ENCODE measurements at regions of chr19 and their contacts with region 1.

Region 1: DNA sequence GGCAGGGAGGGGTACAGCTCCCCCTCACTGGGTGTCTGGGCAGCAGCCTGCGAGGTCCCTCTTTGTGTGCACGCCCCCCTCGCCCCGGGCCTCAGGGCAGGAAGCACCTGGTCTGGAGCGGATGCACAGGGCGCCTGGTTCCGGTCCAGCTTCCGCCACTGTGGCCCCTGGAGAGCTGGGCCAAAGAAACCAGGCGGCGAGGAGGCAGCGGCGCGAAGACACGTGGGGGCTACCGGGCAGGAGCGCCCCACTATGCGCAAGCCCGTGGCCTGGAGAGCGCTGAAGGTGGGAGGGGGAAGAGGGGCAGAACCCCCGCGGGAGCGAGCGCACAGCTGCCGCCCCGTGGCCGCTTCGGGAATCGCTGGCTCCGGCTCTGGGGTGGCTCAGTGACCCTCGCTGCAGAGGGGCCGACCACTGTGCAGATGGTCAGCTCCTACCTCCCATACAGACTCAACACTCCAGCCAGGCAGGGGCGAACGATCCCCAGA is 1.7 kb upstream of the LYL1 start:
- DNase-seq: peak; percentile 42 to 79 (median 64)
- ATAC-seq: peak; percentile 42 to 60
- H3K4me3 Mint-ChIP-seq: peak overlapping the region; percentile 88 to 96 (median 91)
- H3K27ac Mint-ChIP-seq: peak overlapping the region; percentile 79 to 96 (median 92)
- H3K4me1 Mint-ChIP-seq: peaks cover 14 to 56% (median 47%) of the 10 kb centered on the region in 4 donors
- H3K27me3 Mint-ChIP-seq: no peaks in the 10 kb centered on the region

Region 2: DNA sequence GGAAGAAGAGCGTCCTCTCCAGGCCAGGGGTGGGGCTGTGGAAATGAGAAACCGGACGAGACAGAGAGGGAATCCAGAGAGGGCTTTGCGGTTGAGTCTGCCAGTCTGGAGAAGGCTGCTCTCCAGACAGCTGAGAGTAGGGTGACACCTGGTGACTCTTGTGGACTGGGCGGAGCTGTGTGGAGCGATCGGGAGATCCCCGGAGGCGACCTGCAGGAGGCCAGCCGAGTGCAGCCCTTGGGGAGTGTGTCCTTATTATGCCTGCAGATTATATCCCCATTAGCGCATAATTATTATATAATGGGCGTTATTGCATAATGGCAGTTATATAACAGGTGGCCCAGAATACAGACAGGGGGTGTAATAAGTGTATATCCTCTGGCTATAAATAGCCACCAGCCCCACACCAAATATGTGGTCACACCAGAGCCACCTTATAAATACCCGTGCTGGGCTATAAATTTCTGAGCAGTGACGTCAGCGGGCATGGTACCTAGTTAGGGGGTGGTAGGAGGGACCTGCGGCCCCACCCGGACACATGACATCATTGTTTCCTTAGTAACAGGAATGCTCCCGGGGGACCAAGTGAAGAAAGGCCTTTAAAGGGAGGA is 67.9 kb before region 1 on chr19:
- POLR2A ChIA-PET with region 1: no interaction called
- DNase-seq: no peak
- ATAC-seq: no peak
- H3K4me3 Mint-ChIP-seq: no peak overlapping the region
- H3K27ac Mint-ChIP-seq: no peak overlapping the region
- H3K4me1 Mint-ChIP-seq: peaks cover 0 to 8% (median 0%) of the 10 kb centered on the region in 4 donors
- H3K27me3 Mint-ChIP-seq: peaks cover 0 to 2% (median 0%) of the 10 kb centered on the region in 5 donors

Region 3: DNA sequence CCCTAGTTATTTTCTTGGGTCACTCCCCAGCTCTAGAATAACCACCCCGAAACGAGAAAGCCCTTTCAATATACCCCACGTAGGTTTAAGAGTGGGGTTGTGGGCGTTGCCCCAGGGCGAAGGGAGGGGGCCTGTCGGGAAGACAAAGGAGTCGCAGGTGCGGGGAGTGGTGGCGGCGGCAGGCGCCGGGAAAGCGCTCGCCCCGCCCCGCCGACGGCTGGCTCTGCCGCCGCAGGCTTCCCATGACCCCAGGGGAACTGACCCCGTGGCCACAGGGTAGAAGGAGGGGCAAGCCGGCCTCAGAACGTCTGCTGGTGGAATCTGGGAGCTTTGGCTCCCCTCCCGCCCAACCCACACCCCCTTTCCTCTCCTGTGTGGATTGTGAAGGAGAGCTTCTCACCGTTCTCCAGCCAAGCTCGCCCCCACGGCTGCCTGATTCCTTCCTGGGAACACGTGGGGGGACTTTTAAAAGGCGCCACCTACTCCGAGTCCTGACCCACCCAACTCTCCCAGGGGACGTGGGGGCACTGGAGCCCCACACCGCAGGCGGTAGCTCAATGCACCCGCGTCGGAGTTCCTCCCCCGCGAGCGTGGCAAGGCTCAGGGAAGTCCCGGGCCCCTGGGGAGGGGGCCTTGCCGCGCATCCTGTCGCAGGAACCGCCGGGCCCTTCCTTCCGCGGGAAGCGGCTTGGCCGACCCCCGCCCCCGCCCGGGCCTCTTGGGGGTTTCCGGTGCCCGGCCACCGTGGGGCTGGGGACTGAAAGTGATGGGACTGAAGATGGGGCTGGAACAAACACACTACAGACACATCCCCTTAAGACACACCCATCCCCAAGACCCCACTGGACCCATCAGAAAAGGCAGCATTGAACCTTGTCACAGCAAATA is 51.3 kb after region 1 on chr19:
- POLR2A ChIA-PET with region 1: interaction called, 30 read pairs
- DNase-seq: peak; percentile 67 to 89 (median 78)
- ATAC-seq: peak; percentile 8 to 35
- H3K4me3 Mint-ChIP-seq: peak overlapping the region; percentile 93 to 99 (median 98)
- H3K27ac Mint-ChIP-seq: peak overlapping the region; percentile 97 to 100 (median 98)
- H3K4me1 Mint-ChIP-seq: peaks cover 35 to 59% (median 50%) of the 10 kb centered on the region in 4 donors
- H3K27me3 Mint-ChIP-seq: peaks cover 0 to 3% (median 0%) of the 10 kb centered on the region in 5 donors

Region 4: DNA sequence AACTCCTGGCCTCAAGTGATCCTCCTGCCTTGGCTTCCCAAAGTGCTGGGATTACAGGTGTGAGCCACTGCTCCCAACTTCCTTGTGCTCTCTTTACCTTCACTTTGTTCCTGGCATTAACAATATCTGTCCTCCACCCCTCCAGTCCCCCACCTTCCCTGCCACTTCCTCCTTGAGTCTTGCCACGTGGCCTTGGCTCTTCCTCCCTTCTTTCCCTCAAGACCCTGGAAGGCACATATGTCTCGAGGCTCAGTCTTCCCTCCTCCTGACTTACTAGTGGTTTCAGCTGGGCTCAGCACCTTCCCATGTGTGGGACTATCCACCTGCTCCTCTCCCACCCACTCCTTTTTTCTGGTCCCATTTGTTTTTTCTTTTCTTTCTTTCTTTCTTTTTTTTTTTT is 116.4 kb after region 1 on chr19:
- POLR2A ChIA-PET with region 1: no interaction called
- DNase-seq: no peak
- ATAC-seq: no peak
- H3K4me3 Mint-ChIP-seq: no peak overlapping the region
- H3K27ac Mint-ChIP-seq: peak overlapping the region in 4 of 10 donors; percentile 24 to 49 (median 32)
- H3K4me1 Mint-ChIP-seq: peaks cover 9 to 18% (median 14%) of the 10 kb centered on the region in 4 donors
- H3K27me3 Mint-ChIP-seq: peaks cover 0 to 5% (median 0%) of the 10 kb centered on the region in 5 donors

Measured in naive thymus-derived CD8-positive, alpha-beta T cell (primary cell).